B cell (primary cell): ENCODE measurements at regions of chr11 and their contacts with region 1.

Region 1: GRCh38 chr11:39294648-39295047 is 2164.8 kb downstream of the LRRC4C start:
- DNase-seq: no peak
- ATAC-seq: no peak
- H3K4me3 ChIP-seq: no peak overlapping the region
- H3K4me3 Mint-ChIP-seq: no peak overlapping the region
- H3K27ac ChIP-seq: no peak overlapping the region
- H3K27ac Mint-ChIP-seq: no peak overlapping the region
- H3K4me1 ChIP-seq: no peaks in the 10 kb centered on the region
- H3K4me1 Mint-ChIP-seq: no peaks in the 10 kb centered on the region
- H3K27me3 ChIP-seq: no peaks in the 10 kb centered on the region
- H3K27me3 Mint-ChIP-seq: no peaks in the 10 kb centered on the region
- CTCF ChIP-seq: no peak

Region 2: GRCh38 chr11:39236916-39237315 is 57.7 kb before region 1 on chr11:
- CTCF ChIA-PET with region 1: no interaction called
- POLR2A ChIA-PET with region 1: no interaction called
- intact Hi-C with region 1: loop called (anchors 10 kb)
- DNase-seq: no peak
- ATAC-seq: no peak
- H3K4me3 ChIP-seq: no peak overlapping the region
- H3K4me3 Mint-ChIP-seq: no peak overlapping the region
- H3K27ac ChIP-seq: no peak overlapping the region
- H3K27ac Mint-ChIP-seq: no peak overlapping the region
- H3K4me1 ChIP-seq: no peaks in the 10 kb centered on the region
- H3K4me1 Mint-ChIP-seq: no peaks in the 10 kb centered on the region
- H3K27me3 ChIP-seq: no peaks in the 10 kb centered on the region
- H3K27me3 Mint-ChIP-seq: no peaks in the 10 kb centered on the region
- CTCF ChIP-seq: no peak

Region 3: DNA sequence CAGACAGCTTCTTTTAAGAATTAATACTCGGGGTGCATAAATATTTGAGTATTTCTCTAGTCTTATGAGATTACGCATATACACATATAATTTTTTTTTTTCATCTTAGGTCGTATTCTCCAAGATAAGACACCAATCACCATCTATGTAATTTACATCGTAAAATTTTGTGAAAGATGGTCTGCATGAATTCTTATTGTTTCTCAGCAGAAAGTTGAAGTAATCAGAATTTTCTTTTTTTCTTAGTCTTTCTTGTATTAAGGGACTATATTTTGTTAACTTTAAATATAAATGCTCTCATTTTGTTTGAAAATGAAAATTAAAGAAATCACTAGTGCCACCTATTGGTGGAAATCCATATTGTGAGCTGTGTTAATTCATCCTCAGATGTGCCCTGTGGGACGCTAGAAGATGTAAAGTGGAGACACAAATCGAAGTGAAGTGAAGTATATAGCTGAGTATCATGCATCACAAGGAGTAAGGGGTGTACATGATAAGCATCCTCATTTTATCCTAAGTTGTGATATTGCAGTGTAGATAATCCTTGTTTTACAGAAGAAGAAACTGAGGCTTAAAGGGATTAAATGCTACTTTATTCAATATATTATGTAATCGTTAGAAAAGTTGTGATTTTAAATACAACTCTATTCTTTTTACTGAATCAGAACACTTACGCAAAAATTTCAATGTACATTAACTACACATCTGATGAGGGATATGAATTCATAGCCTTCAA is 80.5 kb after region 1 on chr11:
- CTCF ChIA-PET with region 1: no interaction called
- POLR2A ChIA-PET with region 1: no interaction called
- intact Hi-C with region 1: no loop called
- DNase-seq: peak; percentile 8
- ATAC-seq: no peak
- H3K4me3 ChIP-seq: no peak overlapping the region
- H3K4me3 Mint-ChIP-seq: no peak overlapping the region
- H3K27ac ChIP-seq: no peak overlapping the region
- H3K27ac Mint-ChIP-seq: no peak overlapping the region
- H3K4me1 ChIP-seq: peaks cover 0 to 3% of the 10 kb centered on the region in 2 donors
- H3K4me1 Mint-ChIP-seq: peaks cover 7% of the 10 kb centered on the region
- H3K27me3 ChIP-seq: no peaks in the 10 kb centered on the region
- H3K27me3 Mint-ChIP-seq: no peaks in the 10 kb centered on the region
- CTCF ChIP-seq: peak; percentile 71